ENCODE measurements at regions of chr12 and their contacts with region 1.

Region 1: GRCh38 chr12:40107098-40107802 is 1.4 kb upstream of the SLC2A13 start:
- DNase-seq: peak; percentile 79 to 88
- H3K4me3 ChIP-seq: no peak overlapping the region
- H3K4me3 Mint-ChIP-seq: peak overlapping the region; percentile 41
- H3K27ac Mint-ChIP-seq: no peak overlapping the region
- H3K4me1 ChIP-seq: peaks cover 5% of the 10 kb centered on the region; the same call in 1 of the 2 replicates
- H3K4me1 Mint-ChIP-seq: peaks cover 7% of the 10 kb centered on the region
- H3K27me3 ChIP-seq: no peaks in the 10 kb centered on the region; the same call in 1 of the 2 replicates
- H3K27me3 Mint-ChIP-seq: peaks cover 3% of the 10 kb centered on the region
- CTCF ChIP-seq: peak; percentile 94 to 96

Region 2: GRCh38 chr12:39587225-39587624 is 520.0 kb before region 1 on chr12:
- CTCF ChIA-PET with region 1: no interaction called
- POLR2A ChIA-PET with region 1: no interaction called
- intact Hi-C with region 1: loop called (anchors 2 kb)
- DNase-seq: no peak
- H3K4me3 ChIP-seq: no peak overlapping the region
- H3K4me3 Mint-ChIP-seq: no peak overlapping the region
- H3K27ac Mint-ChIP-seq: no peak overlapping the region
- H3K4me1 ChIP-seq: 0 out of 2 replicates have a peak, but pooled peaks cover 3% of the 10 kb centered on the region
- H3K4me1 Mint-ChIP-seq: no peaks in the 10 kb centered on the region
- H3K27me3 ChIP-seq: no peaks in the 10 kb centered on the region
- H3K27me3 Mint-ChIP-seq: peaks cover 3% of the 10 kb centered on the region
- CTCF ChIP-seq: peak in 1 of 2 experiments; percentile 43

Region 3: GRCh38 chr12:39764944-39765560 is 342.2 kb before region 1 on chr12:
- CTCF ChIA-PET with region 1: no interaction called
- POLR2A ChIA-PET with region 1: no interaction called
- intact Hi-C with region 1: loop called (anchors 1 kb)
- DNase-seq: peak in 1 of 2 experiments; percentile 25
- H3K4me3 ChIP-seq: no peak overlapping the region
- H3K4me3 Mint-ChIP-seq: no peak overlapping the region
- H3K27ac Mint-ChIP-seq: no peak overlapping the region
- H3K4me1 ChIP-seq: no peaks in the 10 kb centered on the region
- H3K4me1 Mint-ChIP-seq: no peaks in the 10 kb centered on the region
- H3K27me3 ChIP-seq: no peaks in the 10 kb centered on the region
- H3K27me3 Mint-ChIP-seq: peaks cover 3% of the 10 kb centered on the region
- CTCF ChIP-seq: peak; percentile 76 to 88

Region 4: GRCh38 chr12:39824505-39825212 is 282.6 kb before region 1 on chr12:
- CTCF ChIA-PET with region 1: no interaction called
- POLR2A ChIA-PET with region 1: no interaction called
- intact Hi-C with region 1: loop called (anchors 2 kb)
- DNase-seq: no peak
- H3K4me3 ChIP-seq: no peak overlapping the region
- H3K4me3 Mint-ChIP-seq: no peak overlapping the region
- H3K27ac Mint-ChIP-seq: no peak overlapping the region
- H3K4me1 ChIP-seq: peaks cover 5% of the 10 kb centered on the region; the same call in 1 of the 2 replicates
- H3K4me1 Mint-ChIP-seq: peaks cover 14% of the 10 kb centered on the region
- H3K27me3 ChIP-seq: no peaks in the 10 kb centered on the region
- H3K27me3 Mint-ChIP-seq: no peaks in the 10 kb centered on the region
- CTCF ChIP-seq: no peak

Region 5: DNA sequence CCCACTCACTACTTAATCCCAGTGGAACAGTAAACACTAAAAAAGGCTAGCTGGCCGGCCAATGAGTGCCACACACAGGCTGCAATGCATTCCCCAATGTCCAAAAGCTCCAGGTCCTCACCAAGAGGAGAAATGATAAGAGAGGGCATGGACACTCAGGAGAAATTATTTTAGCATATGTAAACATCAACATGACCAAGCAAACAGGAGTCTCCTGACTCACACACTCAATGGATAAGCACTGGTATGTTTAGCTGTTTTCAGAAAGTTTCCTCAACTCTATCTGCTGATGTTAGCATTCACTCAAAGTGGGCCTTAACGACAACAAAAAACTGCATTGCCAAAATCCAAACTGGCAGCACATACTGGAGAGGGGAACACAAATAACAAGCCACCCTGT is 106.4 kb before region 1 on chr12:
- CTCF ChIA-PET with region 1: no interaction called
- POLR2A ChIA-PET with region 1: no interaction called
- intact Hi-C with region 1: no loop called
- DNase-seq: no peak
- H3K4me3 ChIP-seq: no peak overlapping the region
- H3K4me3 Mint-ChIP-seq: no peak overlapping the region
- H3K27ac Mint-ChIP-seq: no peak overlapping the region
- H3K4me1 ChIP-seq: peaks cover 9% of the 10 kb centered on the region; the same call in 1 of the 2 replicates
- H3K4me1 Mint-ChIP-seq: peaks cover 7% of the 10 kb centered on the region
- H3K27me3 ChIP-seq: no peaks in the 10 kb centered on the region
- H3K27me3 Mint-ChIP-seq: no peaks in the 10 kb centered on the region
- CTCF ChIP-seq: no peak

Region 6: DNA sequence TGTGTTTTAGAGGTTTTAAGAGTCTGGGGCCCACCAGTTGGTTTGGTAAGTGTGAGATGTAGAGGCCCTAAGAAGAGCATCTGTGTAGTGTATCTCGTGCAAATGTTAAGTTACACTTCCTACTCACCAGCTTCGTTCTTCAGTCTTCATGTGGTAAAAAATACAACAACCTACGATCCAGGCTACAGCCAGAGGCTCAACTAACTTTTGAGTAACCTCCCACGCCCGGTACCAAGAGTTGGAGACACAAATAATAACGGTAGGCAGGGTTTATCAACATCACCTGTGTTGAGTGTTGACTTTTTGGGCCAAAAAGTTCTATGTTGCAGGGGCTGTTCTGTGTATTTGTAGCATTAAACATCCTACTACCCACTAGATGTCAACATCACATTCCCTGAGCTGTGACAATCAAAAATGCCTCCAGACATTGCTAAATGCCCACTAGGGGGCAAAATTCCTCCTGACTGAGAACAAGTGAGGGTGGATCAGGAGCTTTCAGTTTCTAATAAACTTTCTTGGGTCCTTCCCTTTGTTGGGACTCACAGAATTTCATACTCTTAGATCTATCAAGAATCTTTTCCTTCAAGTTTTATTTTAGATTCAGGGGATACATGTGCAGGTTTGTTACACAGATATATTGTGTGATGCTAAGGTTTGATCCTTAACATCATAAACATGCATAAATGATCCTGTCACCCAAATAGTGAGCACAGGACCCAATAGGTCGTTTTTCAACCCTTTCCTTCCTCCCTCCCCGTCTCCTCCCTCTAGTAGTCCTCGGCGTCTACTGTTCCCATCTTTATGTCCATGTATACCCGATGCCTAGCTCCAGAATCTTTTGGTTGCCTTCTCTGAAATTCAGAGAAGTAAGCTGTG is 96.1 kb before region 1 on chr12:
- CTCF ChIA-PET with region 1: interaction called, 14 read pairs
- POLR2A ChIA-PET with region 1: interaction called, 3 read pairs
- intact Hi-C with region 1: loop called (anchors 1 kb)
- DNase-seq: peak; percentile 66 to 77
- H3K4me3 ChIP-seq: no peak overlapping the region
- H3K4me3 Mint-ChIP-seq: no peak overlapping the region
- H3K27ac Mint-ChIP-seq: no peak overlapping the region
- H3K4me1 ChIP-seq: no peaks in the 10 kb centered on the region
- H3K4me1 Mint-ChIP-seq: no peaks in the 10 kb centered on the region
- H3K27me3 ChIP-seq: no peaks in the 10 kb centered on the region
- H3K27me3 Mint-ChIP-seq: peaks cover 2% of the 10 kb centered on the region
- CTCF ChIP-seq: peak; percentile 76 to 91

Region 7: DNA sequence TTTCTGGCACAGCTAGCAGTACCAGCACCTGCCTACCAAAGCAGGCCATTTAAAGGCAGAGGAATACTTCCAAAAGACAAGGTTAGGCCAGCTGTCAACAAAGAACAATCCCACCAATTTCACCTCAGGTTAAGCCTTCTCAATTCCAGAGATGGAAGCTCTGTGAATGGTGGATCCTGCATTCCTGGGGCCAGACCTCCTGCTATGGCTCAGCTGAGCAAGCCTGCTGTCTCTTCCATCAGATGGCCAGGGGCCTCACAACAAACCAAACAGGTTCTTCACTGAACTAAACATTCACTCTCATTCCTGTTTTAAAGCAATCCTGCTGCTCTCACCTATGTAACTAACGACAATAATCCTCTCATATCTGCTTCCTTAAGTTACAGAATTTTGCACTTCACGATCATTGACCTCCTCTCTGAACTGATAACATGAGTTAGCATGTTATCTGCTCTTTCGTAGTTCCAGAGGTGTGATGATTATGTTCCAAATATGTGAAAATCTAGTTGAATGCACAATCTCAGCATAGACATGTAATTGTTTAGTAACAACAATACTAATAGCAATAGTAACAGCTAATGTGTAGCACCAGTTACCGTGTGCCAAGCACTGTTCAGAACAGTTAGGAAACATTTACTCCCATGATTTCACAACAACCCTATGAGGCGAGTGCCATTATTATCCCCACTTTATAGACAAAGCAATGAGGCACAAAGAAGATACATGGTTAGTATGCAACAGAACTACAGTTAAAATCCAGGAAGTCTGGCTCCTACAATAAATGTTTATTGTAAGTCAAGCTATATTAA is 74.6 kb before region 1 on chr12:
- CTCF ChIA-PET with region 1: no interaction called
- POLR2A ChIA-PET with region 1: no interaction called
- intact Hi-C with region 1: loop called (anchors 1 kb)
- DNase-seq: peak; percentile 13 to 39
- H3K4me3 ChIP-seq: no peak overlapping the region
- H3K4me3 Mint-ChIP-seq: no peak overlapping the region
- H3K27ac Mint-ChIP-seq: peak overlapping the region; percentile 8
- H3K4me1 ChIP-seq: no peaks in the 10 kb centered on the region
- H3K4me1 Mint-ChIP-seq: peaks cover 7% of the 10 kb centered on the region
- H3K27me3 ChIP-seq: no peaks in the 10 kb centered on the region
- H3K27me3 Mint-ChIP-seq: no peaks in the 10 kb centered on the region
- CTCF ChIP-seq: no peak

Region 8: GRCh38 chr12:40054554-40055227 is 52.6 kb before region 1 on chr12:
- CTCF ChIA-PET with region 1: interaction called, 4 read pairs
- POLR2A ChIA-PET with region 1: no interaction called
- intact Hi-C with region 1: loop called (anchors 5 kb)
- DNase-seq: no peak
- H3K4me3 ChIP-seq: no peak overlapping the region
- H3K4me3 Mint-ChIP-seq: no peak overlapping the region
- H3K27ac Mint-ChIP-seq: no peak overlapping the region
- H3K4me1 ChIP-seq: no peaks in the 10 kb centered on the region
- H3K4me1 Mint-ChIP-seq: no peaks in the 10 kb centered on the region
- H3K27me3 ChIP-seq: no peaks in the 10 kb centered on the region
- H3K27me3 Mint-ChIP-seq: no peaks in the 10 kb centered on the region
- CTCF ChIP-seq: no peak

Region 9: DNA sequence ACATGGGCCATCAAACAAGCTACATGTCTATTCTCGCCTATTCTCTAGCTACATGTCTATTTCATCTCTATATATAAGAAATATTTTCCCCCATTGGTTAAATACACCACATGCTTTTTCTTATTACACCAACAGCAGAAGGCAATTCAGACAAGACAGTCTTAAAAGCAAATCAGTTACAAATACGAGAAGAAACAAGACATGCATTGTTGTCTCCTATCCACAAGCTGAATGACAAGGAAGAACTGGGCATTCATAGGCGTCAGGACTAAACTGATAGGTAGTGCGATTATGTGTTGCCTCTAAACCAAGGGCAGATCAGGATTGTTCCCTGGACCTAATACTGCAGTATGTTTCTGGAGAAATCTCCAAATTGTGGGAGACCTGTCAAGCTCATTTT is 20.8 kb before region 1 on chr12:
- CTCF ChIA-PET with region 1: no interaction called
- POLR2A ChIA-PET with region 1: no interaction called
- intact Hi-C with region 1: no loop called
- DNase-seq: no peak
- H3K4me3 ChIP-seq: no peak overlapping the region
- H3K4me3 Mint-ChIP-seq: no peak overlapping the region
- H3K27ac Mint-ChIP-seq: no peak overlapping the region
- H3K4me1 ChIP-seq: 0 out of 2 replicates have a peak, but pooled peaks cover 9% of the 10 kb centered on the region
- H3K4me1 Mint-ChIP-seq: no peaks in the 10 kb centered on the region
- H3K27me3 ChIP-seq: no peaks in the 10 kb centered on the region
- H3K27me3 Mint-ChIP-seq: no peaks in the 10 kb centered on the region
- CTCF ChIP-seq: no peak